Activated B cell treated with CpG ODN at 0.5 μM for 24 hours (primary cell): ENCODE measurements at regions of chr9 and their contacts with region 1.

Region 1: GRCh38 chr9:111926421-111926875 is 29.8 kb downstream of the UGCG start:
- DNase-seq: peak; percentile 34
- ATAC-seq: peak; percentile 97
- H3K4me3 Mint-ChIP-seq: peak overlapping the region; percentile 56
- H3K27ac Mint-ChIP-seq: peak overlapping the region; percentile 83
- H3K4me1 Mint-ChIP-seq: peaks cover 48% of the 10 kb centered on the region
- H3K27me3 Mint-ChIP-seq: no peaks in the 10 kb centered on the region
- CTCF ChIP-seq: no peak

Region 2: DNA sequence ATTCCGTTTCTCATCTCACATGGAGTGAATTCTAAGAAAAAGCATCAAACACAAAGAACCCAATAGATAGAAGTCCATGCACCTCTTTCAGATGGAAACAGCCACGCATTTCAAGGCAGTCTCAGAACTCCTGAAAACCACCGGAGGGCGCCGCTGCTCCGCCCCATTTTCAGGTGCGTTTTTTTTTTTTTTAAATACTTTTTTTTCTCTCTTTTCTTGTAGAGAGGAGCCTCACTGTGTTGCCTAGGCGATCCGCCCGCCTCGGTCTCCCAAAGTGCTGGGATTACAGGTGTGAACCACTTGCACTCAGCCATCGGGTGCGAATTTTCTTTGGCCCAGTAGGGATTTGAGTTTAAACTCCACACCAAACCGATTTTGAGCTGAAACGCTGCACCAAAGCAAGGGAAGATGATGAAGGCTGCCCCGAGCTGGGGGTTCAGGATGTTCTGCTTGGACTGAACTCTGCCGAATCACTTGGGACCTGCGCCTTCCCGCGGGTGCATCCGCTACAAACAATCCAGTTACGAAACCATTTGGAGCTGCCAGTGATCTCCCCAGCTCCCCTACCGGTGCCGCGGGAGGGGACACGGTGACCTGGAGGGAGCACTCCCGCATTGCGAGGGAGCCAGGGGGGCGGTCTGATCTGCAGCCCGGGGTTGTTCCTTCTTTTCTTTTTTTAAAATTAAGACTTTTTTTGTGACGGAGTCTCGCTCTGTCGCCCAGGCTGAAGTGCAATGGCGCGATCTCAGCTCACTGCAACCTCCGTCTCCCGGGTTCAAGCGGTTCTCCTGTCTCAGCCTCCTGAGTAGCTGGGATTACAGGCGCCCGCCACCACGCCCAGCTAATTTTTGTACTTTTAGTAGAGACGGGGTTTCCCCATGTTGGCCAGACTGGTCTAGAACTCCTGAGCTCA is 328.4 kb before region 1 on chr9:
- CTCF ChIA-PET with region 1: no interaction called
- POLR2A ChIA-PET with region 1: no interaction called
- intact Hi-C with region 1: no loop called
- DNase-seq: peak; percentile 27
- ATAC-seq: peak; percentile 61
- H3K4me3 Mint-ChIP-seq: peak overlapping the region; percentile 83
- H3K27ac Mint-ChIP-seq: no peak overlapping the region
- H3K4me1 Mint-ChIP-seq: peaks cover 22% of the 10 kb centered on the region
- H3K27me3 Mint-ChIP-seq: peaks cover 29% of the 10 kb centered on the region
- CTCF ChIP-seq: no peak

Region 3: GRCh38 chr9:111759762-111760639 is 166.4 kb before region 1 on chr9:
- CTCF ChIA-PET with region 1: no interaction called
- POLR2A ChIA-PET with region 1: interaction called, 4 read pairs
- intact Hi-C with region 1: loop called (anchors 5 kb)
- DNase-seq: no peak
- ATAC-seq: peak; percentile 84
- H3K4me3 Mint-ChIP-seq: no peak overlapping the region
- H3K27ac Mint-ChIP-seq: no peak overlapping the region
- H3K4me1 Mint-ChIP-seq: peaks cover 4% of the 10 kb centered on the region
- H3K27me3 Mint-ChIP-seq: no peaks in the 10 kb centered on the region
- CTCF ChIP-seq: peak; percentile 55

Region 4: GRCh38 chr9:111937781-111938426 is 11.5 kb after region 1 on chr9:
- CTCF ChIA-PET with region 1: no interaction called
- POLR2A ChIA-PET with region 1: interaction called, 20 read pairs
- intact Hi-C with region 1: no loop called
- DNase-seq: no peak
- ATAC-seq: peak; percentile 84
- H3K4me3 Mint-ChIP-seq: peak overlapping the region; percentile 69
- H3K27ac Mint-ChIP-seq: peak overlapping the region; percentile 86
- H3K4me1 Mint-ChIP-seq: peaks cover 43% of the 10 kb centered on the region
- H3K27me3 Mint-ChIP-seq: no peaks in the 10 kb centered on the region
- CTCF ChIP-seq: no peak

Region 5: DNA sequence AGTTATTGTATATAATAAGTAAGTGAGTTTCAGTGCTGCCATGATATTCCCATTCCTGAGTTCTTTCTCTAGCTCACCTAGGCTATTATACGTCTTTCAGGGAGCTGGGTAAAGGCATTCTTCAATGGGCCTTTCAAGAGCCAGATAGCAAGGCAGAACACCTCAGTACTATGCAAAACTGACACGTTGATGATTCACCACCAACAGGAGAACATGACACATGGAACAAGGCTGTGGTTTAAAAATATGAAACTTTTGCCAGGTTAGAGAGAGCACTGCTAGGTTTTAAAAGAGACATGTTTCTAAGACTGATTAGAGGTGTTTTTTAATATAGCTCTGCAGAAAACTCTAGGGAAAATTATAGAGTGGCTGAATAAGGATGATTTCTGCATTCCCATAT is 66.1 kb after region 1 on chr9:
- CTCF ChIA-PET with region 1: no interaction called
- POLR2A ChIA-PET with region 1: interaction called, 17 read pairs
- intact Hi-C with region 1: no loop called
- DNase-seq: no peak
- ATAC-seq: peak; percentile 92
- H3K4me3 Mint-ChIP-seq: no peak overlapping the region
- H3K27ac Mint-ChIP-seq: peak overlapping the region; percentile 79
- H3K4me1 Mint-ChIP-seq: peaks cover 47% of the 10 kb centered on the region
- H3K27me3 Mint-ChIP-seq: no peaks in the 10 kb centered on the region
- CTCF ChIP-seq: no peak

Region 6: GRCh38 chr9:112037281-112038016 is 111.0 kb after region 1 on chr9:
- CTCF ChIA-PET with region 1: no interaction called
- POLR2A ChIA-PET with region 1: interaction called, 22 read pairs
- intact Hi-C with region 1: loop called (anchors 2 kb)
- DNase-seq: no peak
- ATAC-seq: peak; percentile 65
- H3K4me3 Mint-ChIP-seq: peak overlapping the region; percentile 68
- H3K27ac Mint-ChIP-seq: peak overlapping the region; percentile 96
- H3K4me1 Mint-ChIP-seq: peaks cover 88% of the 10 kb centered on the region
- H3K27me3 Mint-ChIP-seq: no peaks in the 10 kb centered on the region
- CTCF ChIP-seq: no peak

Region 7: GRCh38 chr9:112162621-112163413 is 236.4 kb after region 1 on chr9:
- CTCF ChIA-PET with region 1: no interaction called
- POLR2A ChIA-PET with region 1: no interaction called
- intact Hi-C with region 1: no loop called
- DNase-seq: no peak
- ATAC-seq: peak; percentile 80
- H3K4me3 Mint-ChIP-seq: no peak overlapping the region
- H3K27ac Mint-ChIP-seq: peak overlapping the region; percentile 21
- H3K4me1 Mint-ChIP-seq: peaks cover 16% of the 10 kb centered on the region
- H3K27me3 Mint-ChIP-seq: no peaks in the 10 kb centered on the region
- CTCF ChIP-seq: no peak